Activated CD8-positive, alpha-beta T cell treated with anti-CD3 and anti-CD28 coated beads, Interleukin-2, amount 10 ng/mL, durations not matched to agents 7 days and 5 days (primary cell): ENCODE measurements at regions of chr3 and their contacts with region 1.

Region 1: DNA sequence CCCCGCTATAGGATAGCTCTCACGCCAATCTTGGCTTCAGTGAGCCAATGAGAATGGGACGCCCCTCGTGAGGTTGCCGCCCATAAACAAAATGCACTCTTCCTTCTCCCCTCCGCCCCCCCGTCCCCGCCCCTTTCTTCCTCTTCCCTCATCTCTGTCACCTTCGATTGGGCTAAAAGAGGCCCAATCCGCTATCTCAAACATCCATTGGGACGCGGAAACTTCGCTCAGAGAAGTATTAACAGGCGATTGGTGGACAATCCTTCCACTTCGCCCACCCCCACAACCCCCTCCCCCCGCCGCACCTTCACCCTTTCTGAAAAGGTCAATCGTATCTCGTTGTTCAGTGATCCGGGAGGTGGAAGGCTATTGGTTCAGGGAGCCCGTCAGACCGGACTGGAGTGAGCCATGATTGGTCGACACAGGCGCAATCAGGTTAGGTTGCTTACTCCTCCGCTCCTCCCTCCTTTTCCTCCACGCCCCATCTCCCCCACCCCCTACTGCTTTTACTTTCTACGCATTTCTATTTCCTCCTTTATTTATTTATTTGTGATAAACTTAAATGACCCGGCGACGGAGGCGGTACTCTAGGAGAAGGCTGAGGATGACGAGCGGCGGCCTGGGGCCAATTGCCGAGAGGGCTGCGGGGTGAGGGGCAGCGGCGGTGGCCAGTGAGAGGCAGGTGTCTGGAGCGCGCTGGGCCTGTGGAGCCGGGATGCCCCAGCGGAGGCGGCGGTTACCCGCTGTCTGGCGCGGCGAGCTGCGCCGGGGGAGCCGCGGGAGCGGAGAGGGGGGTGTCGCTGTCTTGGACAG is 447 bp upstream of the ZBTB20 start:
- DNase-seq: peak; percentile 99
- ATAC-seq: peak; percentile 88
- H3K4me3 Mint-ChIP-seq: peak overlapping the region; percentile 92
- H3K27ac Mint-ChIP-seq: peak overlapping the region; percentile 96
- H3K4me1 Mint-ChIP-seq: peaks cover 19% of the 10 kb centered on the region
- H3K27me3 Mint-ChIP-seq: peaks cover 1% of the 10 kb centered on the region

Region 2: DNA sequence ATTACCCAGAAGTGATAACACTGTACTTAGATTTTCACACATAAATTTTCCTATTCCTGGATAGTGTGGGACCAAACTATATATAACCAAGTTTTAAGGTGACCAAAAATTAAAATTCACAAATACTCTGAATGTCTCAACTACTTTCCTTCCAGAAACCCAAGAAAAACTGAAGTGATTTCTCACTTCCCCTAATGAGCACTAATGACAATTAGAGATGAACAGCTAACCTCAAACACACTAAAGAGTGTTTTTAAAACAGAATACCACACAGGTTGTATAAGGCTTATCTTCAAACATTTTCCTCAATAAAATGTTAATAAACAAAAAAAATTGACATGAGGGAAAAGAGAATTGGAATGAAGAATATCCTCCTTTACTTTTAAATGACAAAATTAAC is 188.6 kb before region 1 on chr3:
- CTCF ChIA-PET with region 1: no interaction called
- POLR2A ChIA-PET with region 1: no interaction called
- DNase-seq: no peak
- ATAC-seq: no peak
- H3K4me3 Mint-ChIP-seq: no peak overlapping the region
- H3K27ac Mint-ChIP-seq: no peak overlapping the region
- H3K4me1 Mint-ChIP-seq: no peaks in the 10 kb centered on the region
- H3K27me3 Mint-ChIP-seq: no peaks in the 10 kb centered on the region

Region 3: GRCh38 chr3:115092220-115092791 is 55.2 kb before region 1 on chr3:
- CTCF ChIA-PET with region 1: interaction called, 27 read pairs
- POLR2A ChIA-PET with region 1: interaction called, 3 read pairs
- DNase-seq: peak; percentile 70
- ATAC-seq: peak; percentile 51
- H3K4me3 Mint-ChIP-seq: no peak overlapping the region
- H3K27ac Mint-ChIP-seq: no peak overlapping the region
- H3K4me1 Mint-ChIP-seq: no peaks in the 10 kb centered on the region
- H3K27me3 Mint-ChIP-seq: no peaks in the 10 kb centered on the region

Region 4: GRCh38 chr3:115581362-115582135 is 434.0 kb after region 1 on chr3:
- CTCF ChIA-PET with region 1: no interaction called
- POLR2A ChIA-PET with region 1: no interaction called
- DNase-seq: no peak
- ATAC-seq: no peak
- H3K4me3 Mint-ChIP-seq: no peak overlapping the region
- H3K27ac Mint-ChIP-seq: no peak overlapping the region
- H3K4me1 Mint-ChIP-seq: no peaks in the 10 kb centered on the region
- H3K27me3 Mint-ChIP-seq: peaks cover 7% of the 10 kb centered on the region